ENCODE measurements at regions of chr20 and their contacts with region 1.

Region 1: GRCh38 chr20:16801919-16802911 is 54.1 kb downstream of the OTOR start:
- DNase-seq: peak; percentile 53 to 87
- ATAC-seq: no peak
- H3K4me3 ChIP-seq: no peak overlapping the region
- H3K27ac ChIP-seq: no peak overlapping the region
- H3K4me1 ChIP-seq: no peaks in the 10 kb centered on the region
- H3K27me3 ChIP-seq: no peaks in the 10 kb centered on the region

Region 2: DNA sequence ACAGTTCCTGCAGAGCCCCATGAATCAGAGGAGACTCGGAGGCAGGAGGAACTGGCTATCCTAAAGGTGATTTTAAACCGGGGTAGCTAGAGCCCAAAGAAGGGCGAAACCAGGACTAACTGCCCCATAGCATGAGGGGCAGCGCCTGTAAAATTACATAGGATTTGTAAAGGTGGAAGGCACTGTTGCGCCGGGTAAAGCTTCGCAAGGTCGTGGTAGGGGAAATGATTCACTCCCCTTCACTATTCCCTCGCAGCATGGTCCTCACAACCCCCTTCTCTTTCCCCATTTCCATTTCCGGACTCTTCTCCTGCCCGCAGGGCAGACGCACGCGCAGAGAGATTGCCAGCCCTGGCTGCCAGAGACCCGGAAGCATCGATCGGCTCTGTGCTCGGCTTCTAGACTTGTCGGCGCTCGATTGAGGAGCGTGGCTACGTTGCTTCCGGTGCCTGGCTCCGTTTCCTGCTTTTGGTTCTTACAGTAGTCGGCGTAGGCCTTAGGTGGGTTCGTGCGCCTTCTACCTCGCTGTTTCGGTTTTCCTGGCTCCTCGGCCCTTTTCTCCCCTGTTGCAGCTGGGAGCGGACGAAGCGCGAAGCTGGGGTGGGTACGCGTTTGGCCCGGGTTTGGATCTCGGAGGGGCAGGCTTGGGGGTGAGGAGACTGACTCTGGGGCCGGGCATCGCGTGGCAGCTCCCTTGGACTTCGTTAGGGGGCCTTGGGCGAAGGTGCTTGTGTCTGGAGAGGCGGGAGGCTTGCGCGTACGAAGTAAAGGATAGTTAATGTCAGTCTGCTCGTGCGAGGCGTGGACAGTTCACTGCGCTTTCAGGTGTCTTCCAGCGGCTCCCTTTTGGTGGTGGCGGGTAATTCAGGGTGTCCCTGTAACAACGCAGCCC is 72.4 kb before region 1 on chr20 and contains the start of gene SNRPB2:
- intact Hi-C with region 1: loop called in 1 of 2 experiments (anchors 2 kb)
- DNase-seq: peak; percentile 97
- ATAC-seq: peak; percentile 97
- H3K4me3 ChIP-seq: peak within 1 kb of the TSS; percentile 54 to 86
- H3K27ac ChIP-seq: peak within 1 kb of the TSS in 1 of 2 donors; percentile 85
- H3K4me1 ChIP-seq: peaks cover 0 to 2% of the 10 kb centered on the region in 2 donors
- H3K27me3 ChIP-seq: no peaks in the 10 kb centered on the region
- total RNA-seq, gene SNRPB2: 36.0 to 39.4 TPM

Region 3: GRCh38 chr20:17431621-17432364 is 629.6 kb after region 1 on chr20:
- intact Hi-C with region 1: loop called (anchors 2 kb)
- DNase-seq: peak; percentile 54 to 83
- ATAC-seq: peak; percentile 63
- H3K4me3 ChIP-seq: no peak overlapping the region
- H3K27ac ChIP-seq: no peak overlapping the region
- H3K4me1 ChIP-seq: no peaks in the 10 kb centered on the region
- H3K27me3 ChIP-seq: no peaks in the 10 kb centered on the region